ENCODE measurements at regions of chr1 and their contacts with region 1.

Region 1: DNA sequence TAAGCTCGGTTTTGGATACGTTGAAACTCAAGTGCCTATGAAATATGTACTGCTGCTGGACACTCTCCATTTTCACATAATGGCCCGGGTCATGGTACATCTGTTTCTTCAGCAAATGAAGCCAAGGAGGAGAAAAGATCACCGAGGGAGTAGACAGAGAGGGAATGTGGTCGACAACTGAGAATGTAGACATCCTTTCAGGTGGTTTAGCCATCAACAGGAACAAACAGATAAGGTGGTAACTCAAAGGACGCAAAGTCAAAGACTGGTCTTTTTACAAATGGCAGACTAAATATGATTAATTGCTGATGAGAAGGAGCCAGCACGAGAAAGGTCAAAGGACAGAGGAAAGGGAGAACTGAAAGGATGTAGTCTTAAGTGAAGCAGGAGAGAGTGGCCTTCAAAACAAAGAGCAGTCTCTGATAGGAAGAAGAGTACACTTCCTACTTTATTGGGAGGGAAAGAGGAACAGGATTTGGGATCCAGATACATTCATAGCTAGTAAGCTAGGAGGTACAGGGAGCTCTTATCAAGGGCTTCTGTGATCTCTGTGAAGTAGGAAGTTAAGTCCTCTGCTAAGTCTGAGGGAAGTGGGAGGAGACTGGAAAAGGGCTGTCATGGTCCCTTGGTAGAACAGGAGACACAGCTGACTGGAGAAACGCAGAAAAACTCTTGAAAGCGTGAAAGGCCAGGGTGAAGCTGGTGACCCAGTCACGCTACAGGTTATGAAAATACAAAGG is 28.3 kb downstream of the NUP133 start:
- DNase-seq: no peak
- H3K4me3 Mint-ChIP-seq: no peak overlapping the region
- H3K27ac Mint-ChIP-seq: no peak overlapping the region
- H3K4me1 Mint-ChIP-seq: peaks cover 14% of the 10 kb centered on the region
- H3K27me3 Mint-ChIP-seq: no peaks in the 10 kb centered on the region

Region 2: GRCh38 chr1:229270547-229271447 is 209.0 kb before region 1 on chr1 and contains the start of gene RAB4A:
- CTCF ChIA-PET with region 1: interaction called, 4 read pairs
- POLR2A ChIA-PET with region 1: no interaction called
- intact Hi-C with region 1: loop called (anchors 5 kb)
- DNase-seq: peak; percentile 79
- H3K4me3 Mint-ChIP-seq: peak within 1 kb of the TSS; percentile 86
- H3K27ac Mint-ChIP-seq: peak within 1 kb of the TSS; percentile 43
- H3K4me1 Mint-ChIP-seq: peaks cover 34% of the 10 kb centered on the region
- H3K27me3 Mint-ChIP-seq: no peaks in the 10 kb centered on the region
- total RNA-seq, gene RAB4A: 22.9 to 25.9 TPM

Region 3: GRCh38 chr1:229466887-229467286 is 12.9 kb before region 1 on chr1:
- CTCF ChIA-PET with region 1: interaction called, 16 read pairs
- POLR2A ChIA-PET with region 1: no interaction called
- intact Hi-C with region 1: no loop called
- DNase-seq: no peak
- H3K4me3 Mint-ChIP-seq: no peak overlapping the region
- H3K27ac Mint-ChIP-seq: no peak overlapping the region
- H3K4me1 Mint-ChIP-seq: no peaks in the 10 kb centered on the region
- H3K27me3 Mint-ChIP-seq: no peaks in the 10 kb centered on the region

Region 4: GRCh38 chr1:229495782-229496181 is 16.0 kb after region 1 on chr1:
- CTCF ChIA-PET with region 1: interaction called, 11 read pairs
- POLR2A ChIA-PET with region 1: interaction called, 3 read pairs
- intact Hi-C with region 1: no loop called
- DNase-seq: no peak
- H3K4me3 Mint-ChIP-seq: no peak overlapping the region
- H3K27ac Mint-ChIP-seq: no peak overlapping the region
- H3K4me1 Mint-ChIP-seq: no peaks in the 10 kb centered on the region
- H3K27me3 Mint-ChIP-seq: no peaks in the 10 kb centered on the region

Region 5: GRCh38 chr1:229714964-229715603 is 235.3 kb after region 1 on chr1:
- CTCF ChIA-PET with region 1: no interaction called
- POLR2A ChIA-PET with region 1: no interaction called
- intact Hi-C with region 1: no loop called
- DNase-seq: peak; percentile 71
- H3K4me3 Mint-ChIP-seq: no peak overlapping the region
- H3K27ac Mint-ChIP-seq: no peak overlapping the region
- H3K4me1 Mint-ChIP-seq: no peaks in the 10 kb centered on the region
- H3K27me3 Mint-ChIP-seq: peaks cover under 1% of the 10 kb centered on the region